GM12878 (cell line): ENCODE measurements at regions of chr4 and their contacts with region 1.

Region 1: DNA sequence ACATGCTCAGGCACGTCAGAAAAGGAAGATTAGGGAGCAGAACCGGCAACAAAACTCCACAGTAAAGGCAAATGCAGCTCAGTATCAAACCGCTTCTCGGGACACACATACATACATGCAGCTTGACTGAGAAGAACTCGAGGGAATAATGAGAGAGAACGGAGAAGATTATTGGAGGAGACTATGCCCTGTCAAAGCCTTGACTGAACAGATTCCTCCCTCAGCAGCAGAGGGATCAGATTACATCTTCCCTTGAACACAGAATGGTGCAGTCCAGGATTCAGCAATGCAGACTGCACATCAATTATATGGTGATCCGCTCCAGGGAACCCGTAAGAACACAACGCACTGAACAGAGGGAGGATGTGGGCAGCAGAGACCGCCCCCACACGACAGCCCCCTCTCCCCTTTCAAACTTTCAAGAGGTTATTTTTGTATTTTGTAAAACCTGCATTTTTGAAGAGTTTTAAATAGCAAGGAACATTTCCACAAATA is 183.2 kb downstream of the FBXW7 start:
- DNase-seq: peak; percentile 59
- ATAC-seq: peak; percentile 82
- H3K4me3 ChIP-seq: peak overlapping the region; percentile 64
- H3K27ac ChIP-seq: peak overlapping the region; percentile 74
- H3K4me1 ChIP-seq: no peaks in the 10 kb centered on the region; the same call in 1 of the 2 replicates
- H3K27me3 ChIP-seq: no peaks in the 10 kb centered on the region
- CTCF ChIP-seq: no peak
- EP300 ChIP-seq: no peak
- POLR2A ChIP-seq: peak; percentile 46
- RAD21 ChIP-seq: no peak

Region 2: DNA sequence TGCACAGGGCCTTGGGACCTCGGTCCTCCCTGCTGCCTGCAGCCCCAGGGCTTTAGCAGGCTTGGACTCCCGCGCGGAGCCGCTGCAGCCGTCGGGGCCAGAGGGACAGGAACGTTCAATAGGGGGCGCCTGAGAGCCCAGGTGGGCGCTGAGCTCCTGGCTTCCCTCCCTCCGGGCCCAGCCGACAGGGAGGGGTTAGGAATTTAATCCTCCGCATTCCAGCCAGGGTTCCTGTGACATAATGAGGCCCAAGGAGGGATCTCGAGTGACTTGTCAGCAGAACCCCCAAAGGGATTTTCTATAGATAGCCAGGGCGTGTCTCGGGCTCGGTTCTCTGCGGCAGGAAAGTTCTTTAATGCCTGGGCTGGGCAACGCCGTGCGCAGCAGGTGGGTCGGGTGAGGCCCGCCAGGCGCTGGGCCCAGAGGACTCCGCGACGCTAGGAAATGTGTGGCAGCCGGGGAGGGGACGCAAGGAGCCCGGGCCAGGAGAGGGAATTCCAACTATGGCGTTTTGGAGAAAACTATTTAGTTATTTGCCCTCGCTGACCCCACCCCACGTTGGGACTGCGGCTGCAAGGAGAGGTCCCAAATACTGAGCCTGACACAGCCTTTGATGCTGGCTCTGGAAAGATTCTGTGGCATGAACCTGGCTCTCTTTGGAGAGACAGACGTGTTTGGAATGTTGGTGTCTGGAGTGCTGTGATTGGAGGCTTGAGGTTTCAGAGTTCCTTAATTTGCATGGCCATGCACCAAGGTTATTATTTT is 306.7 kb before region 1 on chr4:
- CTCF ChIA-PET with region 1: interaction called, 8 read pairs
- POLR2A ChIA-PET with region 1: no interaction called
- RAD21 ChIA-PET with region 1: no interaction called
- SMC1A ChIA-PET with region 1: no interaction called
- in situ Hi-C with region 1: no loop called
- intact Hi-C with region 1: loop called (anchors 5 kb)
- DNase-seq: no peak
- ATAC-seq: peak; percentile 83
- H3K4me3 ChIP-seq: no peak overlapping the region
- H3K27ac ChIP-seq: no peak overlapping the region
- H3K4me1 ChIP-seq: no peaks in the 10 kb centered on the region
- H3K27me3 ChIP-seq: no peaks in the 10 kb centered on the region
- CTCF ChIP-seq: peak; percentile 45 to 57 (median 49); a peak in 5 of 6 replicates
- EP300 ChIP-seq: no peak
- POLR2A ChIP-seq: no peak
- RAD21 ChIP-seq: peak; percentile 32

Region 3: GRCh38 chr4:152278505-152279233 is 74.0 kb before region 1 on chr4:
- CTCF ChIA-PET with region 1: interaction called, 5 read pairs
- POLR2A ChIA-PET with region 1: no interaction called
- RAD21 ChIA-PET with region 1: interaction called, 14 read pairs
- SMC1A ChIA-PET with region 1: interaction called, 5 read pairs
- in situ Hi-C with region 1: no loop called
- intact Hi-C with region 1: no loop called
- DNase-seq: peak; percentile 71
- ATAC-seq: peak; percentile 87
- H3K4me3 ChIP-seq: no peak overlapping the region
- H3K27ac ChIP-seq: no peak overlapping the region
- H3K4me1 ChIP-seq: no peaks in the 10 kb centered on the region
- H3K27me3 ChIP-seq: no peaks in the 10 kb centered on the region; a peak in 1 of 4 replicates
- CTCF ChIP-seq: no peak
- EP300 ChIP-seq: no peak; a peak in 1 of 4 replicates
- POLR2A ChIP-seq: no peak
- RAD21 ChIP-seq: no peak

Region 4: GRCh38 chr4:152304220-152304619 is 48.4 kb before region 1 on chr4:
- CTCF ChIA-PET with region 1: interaction called, 4 read pairs
- POLR2A ChIA-PET with region 1: no interaction called
- RAD21 ChIA-PET with region 1: interaction called, 3 read pairs
- SMC1A ChIA-PET with region 1: interaction called, 4 read pairs
- in situ Hi-C with region 1: no loop called
- intact Hi-C with region 1: loop called (anchors 1 kb)
- DNase-seq: peak; percentile 71
- ATAC-seq: peak; percentile 95
- H3K4me3 ChIP-seq: no peak overlapping the region
- H3K27ac ChIP-seq: peak overlapping the region; percentile 28; the same call in 1 of the 2 replicates
- H3K4me1 ChIP-seq: no peaks in the 10 kb centered on the region
- H3K27me3 ChIP-seq: no peaks in the 10 kb centered on the region
- CTCF ChIP-seq: no peak
- EP300 ChIP-seq: peak; percentile 61 to 78; a peak in 3 of 4 replicates
- POLR2A ChIP-seq: no peak
- RAD21 ChIP-seq: no peak

Region 5: GRCh38 chr4:152369902-152370295 is 17.2 kb after region 1 on chr4:
- CTCF ChIA-PET with region 1: interaction called, 15 read pairs
- POLR2A ChIA-PET with region 1: interaction called, 4 read pairs
- RAD21 ChIA-PET with region 1: interaction called, 20 read pairs
- SMC1A ChIA-PET with region 1: interaction called, 16 read pairs
- in situ Hi-C with region 1: no loop called
- intact Hi-C with region 1: no loop called
- DNase-seq: no peak
- ATAC-seq: peak; percentile 16; the same call in 1 of the 3 replicates
- H3K4me3 ChIP-seq: no peak overlapping the region
- H3K27ac ChIP-seq: no peak overlapping the region
- H3K4me1 ChIP-seq: peaks cover 16% of the 10 kb centered on the region
- H3K27me3 ChIP-seq: no peaks in the 10 kb centered on the region
- CTCF ChIP-seq: peak in 2 of 3 experiments; percentile 4 to 5; a peak in 2 of 6 replicates
- EP300 ChIP-seq: no peak
- POLR2A ChIP-seq: no peak
- RAD21 ChIP-seq: peak; percentile 28; the same call in 1 of the 2 replicates

Region 6: DNA sequence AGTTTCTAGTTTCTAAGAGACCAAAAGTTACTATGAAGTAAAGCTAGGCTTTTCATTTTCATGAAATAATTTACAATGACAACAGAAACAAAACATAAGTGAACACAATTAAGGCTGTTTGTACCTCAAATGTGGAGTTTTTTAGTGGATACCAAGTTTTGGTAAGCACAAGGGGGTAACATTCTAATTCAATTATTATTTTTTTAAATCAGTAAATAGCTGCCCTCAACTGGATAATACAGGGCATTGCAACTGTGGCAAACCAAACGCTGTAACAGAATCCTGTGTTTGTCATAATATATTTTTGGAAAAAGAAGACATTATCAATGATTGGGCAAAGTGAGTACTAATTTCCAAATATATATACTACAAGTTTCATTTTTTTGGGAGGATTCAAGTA is 32.9 kb after region 1 on chr4:
- CTCF ChIA-PET with region 1: interaction called, 11 read pairs
- POLR2A ChIA-PET with region 1: interaction called, 3 read pairs
- RAD21 ChIA-PET with region 1: interaction called, 7 read pairs
- SMC1A ChIA-PET with region 1: interaction called, 6 read pairs
- in situ Hi-C with region 1: no loop called
- intact Hi-C with region 1: no loop called
- DNase-seq: no peak
- ATAC-seq: peak; percentile 57
- H3K4me3 ChIP-seq: no peak overlapping the region
- H3K27ac ChIP-seq: no peak overlapping the region
- H3K4me1 ChIP-seq: no peaks in the 10 kb centered on the region
- H3K27me3 ChIP-seq: no peaks in the 10 kb centered on the region
- CTCF ChIP-seq: peak; percentile 39 to 48 (median 42)
- EP300 ChIP-seq: no peak
- POLR2A ChIP-seq: no peak
- RAD21 ChIP-seq: peak; percentile 57

Region 7: GRCh38 chr4:152510349-152511147 is 157.9 kb after region 1 on chr4:
- CTCF ChIA-PET with region 1: no interaction called
- POLR2A ChIA-PET with region 1: no interaction called
- RAD21 ChIA-PET with region 1: no interaction called
- SMC1A ChIA-PET with region 1: no interaction called
- in situ Hi-C with region 1: no loop called
- intact Hi-C with region 1: no loop called
- DNase-seq: no peak
- ATAC-seq: peak; percentile 71
- H3K4me3 ChIP-seq: peak overlapping the region; percentile 61; the same call in 1 of the 2 replicates
- H3K27ac ChIP-seq: peak overlapping the region; percentile 74
- H3K4me1 ChIP-seq: peaks cover 24% of the 10 kb centered on the region
- H3K27me3 ChIP-seq: no peaks in the 10 kb centered on the region
- CTCF ChIP-seq: no peak
- EP300 ChIP-seq: no peak
- POLR2A ChIP-seq: no peak
- RAD21 ChIP-seq: no peak